ENCODE measurements at regions of chr1 and their contacts with region 1.

Region 1: DNA sequence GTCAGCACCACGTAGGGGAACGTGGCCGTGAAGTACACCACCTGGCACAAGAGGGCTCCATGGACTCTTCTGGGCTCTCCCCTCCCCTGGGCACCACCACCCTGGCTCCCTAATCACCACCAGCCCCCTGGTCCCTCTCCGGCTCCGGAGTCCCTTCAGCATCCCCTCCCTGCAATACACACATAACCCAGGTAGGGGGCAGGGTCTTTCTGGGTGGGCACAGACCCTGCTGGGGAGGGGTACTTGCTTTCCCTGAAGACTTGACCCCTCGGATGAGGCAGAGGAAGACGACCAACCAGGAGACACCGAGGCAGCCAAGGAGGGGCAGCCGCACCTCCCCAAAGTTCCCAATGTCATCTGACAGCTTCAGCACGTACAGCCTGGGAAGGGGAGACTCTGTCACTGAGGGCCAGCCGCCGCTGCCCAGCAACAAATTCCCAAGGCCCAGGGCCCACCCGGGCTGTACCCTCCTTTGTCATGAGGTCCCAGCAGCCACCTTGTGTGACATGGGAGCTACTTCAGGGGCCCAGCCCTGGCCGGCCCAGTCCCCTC is 11.3 kb downstream of the CCDC24 start:
- DNase-seq: no peak
- CTCF ChIP-seq: no peak

Region 2: DNA sequence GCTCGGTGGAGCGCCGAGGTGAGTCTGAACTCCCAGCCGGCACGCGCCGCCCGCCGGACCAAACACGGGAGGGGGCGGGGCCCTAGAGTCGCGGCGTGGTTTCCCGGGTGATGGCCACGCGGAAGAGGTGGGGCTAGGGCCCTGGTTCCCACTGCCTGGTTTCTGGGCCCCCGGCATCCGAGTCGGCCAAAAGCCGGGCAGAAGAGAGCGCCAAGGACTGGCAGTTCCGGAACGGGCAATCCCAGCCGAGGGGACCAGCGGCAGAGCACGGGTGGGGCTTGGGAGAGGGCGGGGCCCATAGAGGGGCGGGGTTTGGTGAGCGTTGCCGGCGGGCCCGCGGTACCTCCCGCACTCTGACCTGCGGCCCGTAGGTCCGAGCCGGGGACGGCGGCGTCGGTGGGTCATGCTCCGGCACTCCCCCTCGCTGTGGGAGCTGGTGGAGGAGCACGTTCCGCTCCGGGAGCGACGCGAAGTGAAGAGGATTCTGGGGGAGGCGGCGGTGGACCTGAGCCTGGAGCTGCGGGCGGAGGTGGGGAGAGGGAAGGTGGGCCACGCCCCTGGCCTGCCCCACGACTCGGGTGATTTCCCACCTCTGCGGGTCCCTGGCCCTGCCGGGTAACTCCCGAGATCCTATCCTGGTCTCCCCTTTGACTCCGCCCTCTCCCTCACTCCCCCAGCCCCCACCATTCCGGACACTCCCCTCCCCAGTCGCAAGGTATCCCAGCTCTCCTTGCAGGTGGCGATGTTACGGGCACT is 11.0 kb before region 1 on chr1 and contains the start of gene CCDC24:
- CTCF ChIA-PET with region 1: interaction called, 59 read pairs
- POLR2A ChIA-PET with region 1: no interaction called
- DNase-seq: peak; percentile 90
- CTCF ChIP-seq: no peak

Region 3: GRCh38 chr1:44012941-44013609 is 10.4 kb after region 1 on chr1:
- CTCF ChIA-PET with region 1: interaction called, 42 read pairs
- POLR2A ChIA-PET with region 1: no interaction called
- DNase-seq: no peak
- CTCF ChIP-seq: no peak

Region 4: DNA sequence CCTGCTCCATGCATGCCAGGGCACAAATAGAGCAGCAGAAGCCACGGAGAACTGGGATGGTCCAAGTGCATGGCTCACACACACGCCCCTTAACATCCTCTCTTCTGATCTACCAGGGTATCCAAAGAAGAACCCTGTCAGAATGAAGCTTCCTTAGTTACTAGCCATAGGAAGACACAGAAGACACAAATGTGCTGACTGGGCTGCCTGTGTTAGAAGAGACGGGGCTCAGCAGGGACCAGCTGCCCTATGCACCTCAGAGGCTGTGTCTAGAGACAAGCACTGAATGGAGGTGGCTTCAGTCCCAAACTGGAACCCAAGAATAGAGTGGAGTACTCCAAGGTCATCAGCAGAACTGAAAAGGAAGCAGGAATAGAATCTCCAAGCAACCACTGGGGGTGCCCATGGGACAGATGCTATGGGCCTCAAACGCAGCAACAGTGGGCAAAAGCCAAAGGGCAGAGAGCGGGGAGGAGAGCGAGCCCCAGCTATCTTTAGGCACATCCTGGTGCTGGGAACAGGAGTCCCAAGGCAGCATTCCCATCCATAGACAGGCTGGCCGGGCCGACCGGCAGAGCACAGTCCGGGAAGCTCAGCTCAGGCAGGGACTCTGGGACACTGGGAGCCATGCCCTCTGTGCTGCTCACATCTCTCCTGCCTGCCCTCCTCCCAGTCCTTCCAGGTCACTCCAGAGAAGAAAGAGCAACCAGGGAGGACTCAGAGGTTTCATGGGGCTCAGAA is 19.1 kb after region 1 on chr1:
- CTCF ChIA-PET with region 1: interaction called, 42 read pairs
- POLR2A ChIA-PET with region 1: no interaction called
- DNase-seq: no peak
- CTCF ChIP-seq: no peak

Region 5: GRCh38 chr1:44029906-44030604 is 27.4 kb after region 1 on chr1:
- CTCF ChIA-PET with region 1: interaction called, 169 read pairs
- POLR2A ChIA-PET with region 1: no interaction called
- DNase-seq: peak; percentile 92
- CTCF ChIP-seq: no peak

Region 6: GRCh38 chr1:44049839-44050238 is 47.2 kb after region 1 on chr1:
- CTCF ChIA-PET with region 1: interaction called, 183 read pairs
- POLR2A ChIA-PET with region 1: no interaction called
- DNase-seq: no peak
- CTCF ChIP-seq: no peak

Measured in GM10248 (cell line).